ENCODE measurements at regions of chr2 and their contacts with region 1.

Region 1: DNA sequence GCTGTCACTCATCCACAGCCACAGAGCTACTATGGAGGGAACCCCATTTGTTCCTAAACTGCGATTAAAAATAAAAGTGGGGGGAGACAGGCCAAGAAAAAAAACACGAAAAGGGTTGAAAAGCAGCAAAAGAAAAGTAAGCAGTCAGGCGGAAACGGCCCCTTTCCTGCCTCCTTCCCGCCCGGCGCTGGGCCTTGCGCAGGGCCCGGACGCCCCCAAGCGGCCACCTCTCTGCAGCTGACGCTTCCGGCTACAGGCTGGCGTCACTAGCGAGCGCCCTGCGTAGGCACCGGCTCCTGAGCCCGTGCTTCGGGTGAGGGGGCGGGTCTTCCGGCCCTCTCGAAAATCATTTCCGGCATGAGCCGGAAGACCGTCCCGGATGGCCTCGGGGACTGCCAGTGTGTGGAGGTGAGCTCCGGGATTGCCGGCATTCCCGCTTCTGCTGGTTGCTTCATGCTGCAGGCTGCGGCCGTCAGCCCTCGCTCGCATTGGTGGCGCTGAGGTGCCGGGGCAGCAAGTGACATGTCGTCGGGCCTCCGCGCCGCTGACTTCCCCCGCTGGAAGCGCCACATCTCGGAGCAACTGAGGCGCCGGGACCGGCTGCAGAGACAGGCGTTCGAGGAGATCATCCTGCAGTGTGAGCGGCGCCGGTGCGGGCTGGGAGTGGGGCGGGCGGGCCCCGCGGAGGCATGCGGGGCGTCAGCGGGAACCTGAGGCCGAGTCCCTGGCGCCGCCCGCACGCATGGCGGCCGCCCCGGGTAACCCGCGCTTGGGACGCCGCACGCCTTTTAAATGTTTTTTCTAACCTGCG is at the start of gene ATG16L1:
- DNase-seq: peak; percentile 93 to 96 (median 95)
- H3K4me3 ChIP-seq: peak within 1 kb of the TSS; percentile 96 to 98
- H3K4me3 Mint-ChIP-seq: peak within 1 kb of the TSS; percentile 90 to 94 (median 93)
- H3K27ac ChIP-seq: peak within 1 kb of the TSS; percentile 89
- H3K27ac Mint-ChIP-seq: peak within 1 kb of the TSS; percentile 94 to 98 (median 98)
- H3K4me1 ChIP-seq: peaks cover 84% of the 10 kb centered on the region
- H3K4me1 Mint-ChIP-seq: peaks cover 57 to 83% (median 68%) of the 10 kb centered on the region in 4 donors
- H3K27me3 ChIP-seq: no peaks in the 10 kb centered on the region
- H3K27me3 Mint-ChIP-seq: no peaks in the 10 kb centered on the region
- total RNA-seq, gene ATG16L1: 81.1 to 89.4 TPM

Region 2: DNA sequence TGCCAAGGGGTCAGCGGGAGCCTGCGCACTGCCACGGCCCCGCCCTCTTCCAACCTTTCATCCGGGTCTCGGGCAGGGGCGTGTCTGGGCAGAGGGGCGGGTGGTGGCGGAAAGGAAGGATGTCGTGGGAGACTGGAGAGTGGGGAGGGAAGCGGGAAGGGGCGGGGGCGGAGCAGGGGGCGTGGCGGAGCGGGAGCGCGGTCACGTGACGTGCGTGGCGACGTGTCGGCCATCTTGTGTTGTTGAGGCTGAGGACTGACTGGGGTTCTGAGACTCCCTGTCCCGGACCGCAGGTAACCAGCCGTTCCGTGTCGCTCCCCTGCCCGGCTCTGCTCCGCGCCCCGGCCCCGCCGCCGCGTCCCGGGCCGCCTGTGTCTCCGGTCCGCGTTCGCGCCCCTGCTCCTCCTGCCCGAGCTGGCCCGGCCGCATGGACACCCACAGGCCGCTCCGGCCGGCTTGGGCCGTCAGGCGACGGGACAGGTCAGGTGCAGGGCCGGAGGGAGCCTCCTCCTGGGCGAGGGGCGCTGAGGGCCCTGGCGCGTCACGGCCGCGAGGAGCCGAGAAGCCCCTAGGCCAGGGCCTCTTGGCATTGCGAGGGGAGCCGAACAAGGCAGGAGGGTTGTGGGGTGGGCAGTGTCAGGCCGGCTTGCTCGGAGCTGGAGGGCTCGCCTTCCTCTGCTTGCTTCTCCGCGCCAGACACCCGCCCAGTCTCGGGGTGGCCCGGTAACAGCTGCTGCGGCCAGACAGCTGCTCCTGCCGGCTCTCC is 554.2 kb before region 1 on chr2 and contains the start of gene GIGYF2:
- CTCF ChIA-PET with region 1: no interaction called
- POLR2A ChIA-PET with region 1: no interaction called
- intact Hi-C with region 1: loop called (anchors 10 kb)
- DNase-seq: peak; percentile 86 to 91 (median 87)
- H3K4me3 ChIP-seq: peak within 1 kb of the TSS; percentile 55 to 88
- H3K4me3 Mint-ChIP-seq: peak within 1 kb of the TSS; percentile 91 to 96 (median 93)
- H3K27ac ChIP-seq: peak within 1 kb of the TSS; percentile 86
- H3K27ac Mint-ChIP-seq: peak within 1 kb of the TSS; percentile 90 to 95 (median 93)
- H3K4me1 ChIP-seq: peaks cover 40% of the 10 kb centered on the region
- H3K4me1 Mint-ChIP-seq: peaks cover 31 to 52% (median 36%) of the 10 kb centered on the region in 4 donors
- H3K27me3 ChIP-seq: no peaks in the 10 kb centered on the region
- H3K27me3 Mint-ChIP-seq: no peaks in the 10 kb centered on the region
- total RNA-seq, gene GIGYF2: 82.1 to 89.6 TPM

Region 3: GRCh38 chr2:232854082-232854481 is 397.4 kb before region 1 on chr2:
- CTCF ChIA-PET with region 1: interaction called, 13 read pairs
- POLR2A ChIA-PET with region 1: interaction called, 4 read pairs
- intact Hi-C with region 1: loop called (anchors 1 kb)
- DNase-seq: no peak
- H3K4me3 ChIP-seq: no peak overlapping the region
- H3K4me3 Mint-ChIP-seq: no peak overlapping the region
- H3K27ac ChIP-seq: no peak overlapping the region
- H3K27ac Mint-ChIP-seq: peak overlapping the region in 1 of 7 donors; percentile 35
- H3K4me1 ChIP-seq: no peaks in the 10 kb centered on the region
- H3K4me1 Mint-ChIP-seq: no peaks in the 10 kb centered on the region
- H3K27me3 ChIP-seq: no peaks in the 10 kb centered on the region
- H3K27me3 Mint-ChIP-seq: no peaks in the 10 kb centered on the region

Region 4: GRCh38 chr2:232951891-232952290 is 299.6 kb before region 1 on chr2:
- CTCF ChIA-PET with region 1: no interaction called
- POLR2A ChIA-PET with region 1: no interaction called
- intact Hi-C with region 1: no loop called
- DNase-seq: no peak
- H3K4me3 ChIP-seq: no peak overlapping the region
- H3K4me3 Mint-ChIP-seq: no peak overlapping the region
- H3K27ac ChIP-seq: no peak overlapping the region
- H3K27ac Mint-ChIP-seq: no peak overlapping the region
- H3K4me1 ChIP-seq: no peaks in the 10 kb centered on the region
- H3K4me1 Mint-ChIP-seq: no peaks in the 10 kb centered on the region
- H3K27me3 ChIP-seq: no peaks in the 10 kb centered on the region
- H3K27me3 Mint-ChIP-seq: peaks cover 4% of the 10 kb centered on the region in 2 donors

Region 5: GRCh38 chr2:233100192-233100998 is 151.1 kb before region 1 on chr2:
- CTCF ChIA-PET with region 1: interaction called, 13 read pairs
- POLR2A ChIA-PET with region 1: interaction called, 6 read pairs
- intact Hi-C with region 1: no loop called
- DNase-seq: peak; percentile 49 to 82 (median 59)
- H3K4me3 ChIP-seq: no peak overlapping the region
- H3K4me3 Mint-ChIP-seq: peak overlapping the region; percentile 43 to 88 (median 76)
- H3K27ac ChIP-seq: peak overlapping the region; percentile 41
- H3K27ac Mint-ChIP-seq: peak overlapping the region; percentile 77 to 96 (median 87)
- H3K4me1 ChIP-seq: peaks cover 64% of the 10 kb centered on the region
- H3K4me1 Mint-ChIP-seq: peaks cover 50 to 84% (median 66%) of the 10 kb centered on the region in 4 donors
- H3K27me3 ChIP-seq: no peaks in the 10 kb centered on the region
- H3K27me3 Mint-ChIP-seq: no peaks in the 10 kb centered on the region

Region 6: DNA sequence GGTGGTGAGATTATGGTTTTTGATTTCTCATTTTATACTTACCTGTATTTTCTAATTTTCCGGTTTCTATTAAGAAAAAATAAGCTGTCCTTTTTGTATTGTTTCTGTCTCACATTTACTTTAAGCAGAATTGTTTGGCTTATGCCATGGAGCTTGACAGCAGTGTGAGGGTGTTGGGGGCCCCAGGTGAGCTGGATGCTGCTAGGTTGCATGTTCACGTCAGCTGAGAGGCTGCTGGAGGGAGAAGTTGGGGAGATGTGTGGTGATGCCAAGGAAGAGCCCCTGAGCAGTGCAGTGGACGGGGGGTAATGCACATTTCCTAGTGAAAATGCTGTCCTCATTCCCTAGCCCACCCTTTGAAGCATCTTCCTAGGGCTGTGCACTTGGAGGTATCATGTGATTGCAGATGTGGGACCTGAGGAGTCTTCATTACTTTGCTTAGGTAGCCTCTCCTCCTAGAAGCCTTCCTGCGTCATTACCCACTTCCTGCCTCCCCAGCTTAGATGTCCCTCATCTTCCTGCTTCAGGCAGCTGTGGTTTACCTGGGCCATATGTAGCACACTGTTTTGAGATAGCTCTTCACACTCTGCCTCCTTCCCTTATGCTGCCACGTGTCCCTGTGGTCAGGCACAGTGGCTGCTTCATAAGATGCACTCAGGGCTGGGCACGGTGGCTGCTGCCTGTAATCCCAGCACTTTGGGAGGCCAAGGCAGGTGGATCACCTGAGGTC is 16.2 kb after region 1 on chr2:
- CTCF ChIA-PET with region 1: interaction called, 52 read pairs
- POLR2A ChIA-PET with region 1: interaction called, 162 read pairs
- intact Hi-C with region 1: loop called (anchors 1 kb)
- DNase-seq: peak; percentile 90 to 96 (median 93)
- H3K4me3 ChIP-seq: peak overlapping the region in 1 of 2 donors; percentile 39
- H3K4me3 Mint-ChIP-seq: peak overlapping the region; percentile 52 to 89 (median 79)
- H3K27ac ChIP-seq: peak overlapping the region; percentile 81
- H3K27ac Mint-ChIP-seq: peak overlapping the region; percentile 96 to 99 (median 97)
- H3K4me1 ChIP-seq: peaks cover 68% of the 10 kb centered on the region
- H3K4me1 Mint-ChIP-seq: peaks cover 39 to 76% (median 64%) of the 10 kb centered on the region in 4 donors
- H3K27me3 ChIP-seq: no peaks in the 10 kb centered on the region
- H3K27me3 Mint-ChIP-seq: no peaks in the 10 kb centered on the region

Region 7: GRCh38 chr2:233353769-233354499 is 102.4 kb after region 1 on chr2 and contains the start of gene DGKD:
- CTCF ChIA-PET with region 1: interaction called, 6 read pairs
- POLR2A ChIA-PET with region 1: interaction called, 14 read pairs
- intact Hi-C with region 1: no loop called
- DNase-seq: peak; percentile 63 to 72 (median 65)
- H3K4me3 ChIP-seq: peak within 1 kb of the TSS; percentile 75 to 76
- H3K4me3 Mint-ChIP-seq: peak within 1 kb of the TSS; percentile 89 to 98 (median 94)
- H3K27ac ChIP-seq: peak within 1 kb of the TSS; percentile 55
- H3K27ac Mint-ChIP-seq: peak within 1 kb of the TSS; percentile 91 to 97 (median 92)
- H3K4me1 ChIP-seq: peaks cover 48% of the 10 kb centered on the region
- H3K4me1 Mint-ChIP-seq: peaks cover 51 to 75% (median 57%) of the 10 kb centered on the region in 4 donors
- H3K27me3 ChIP-seq: no peaks in the 10 kb centered on the region
- H3K27me3 Mint-ChIP-seq: peaks cover 0 to 1% of the 10 kb centered on the region in 2 donors
- total RNA-seq, gene DGKD: 129 to 136 TPM

Region 8: GRCh38 chr2:233519787-233520611 is 268.5 kb after region 1 on chr2:
- CTCF ChIA-PET with region 1: no interaction called
- POLR2A ChIA-PET with region 1: no interaction called
- intact Hi-C with region 1: no loop called
- DNase-seq: no peak
- H3K4me3 ChIP-seq: no peak overlapping the region
- H3K4me3 Mint-ChIP-seq: no peak overlapping the region
- H3K27ac ChIP-seq: no peak overlapping the region
- H3K27ac Mint-ChIP-seq: no peak overlapping the region
- H3K4me1 ChIP-seq: no peaks in the 10 kb centered on the region
- H3K4me1 Mint-ChIP-seq: no peaks in the 10 kb centered on the region
- H3K27me3 ChIP-seq: no peaks in the 10 kb centered on the region
- H3K27me3 Mint-ChIP-seq: no peaks in the 10 kb centered on the region

Measured in CD4-positive, alpha-beta memory T cell (primary cell).